ENCODE measurements at regions of chr11 and their contacts with region 1.

Region 1: GRCh38 chr11:13462901-13463778 is at the start of gene BTBD10:
- DNase-seq: peak; percentile 84
- H3K4me3 ChIP-seq: peak within 1 kb of the TSS; percentile 94
- H3K27ac ChIP-seq: peak within 1 kb of the TSS; percentile 68
- H3K4me1 ChIP-seq: peaks cover 20% of the 10 kb centered on the region
- H3K27me3 ChIP-seq: no peaks in the 10 kb centered on the region
- CTCF ChIP-seq: no peak
- total RNA-seq, gene BTBD10: 16.5 and 22.0 TPM in 2 replicates

Region 2: GRCh38 chr11:12813371-12814225 is 649.5 kb before region 1 on chr11:
- CTCF ChIA-PET with region 1: no interaction called
- POLR2A ChIA-PET with region 1: interaction called, 12 read pairs
- intact Hi-C with region 1: no loop called
- DNase-seq: peak; percentile 64 to 71
- H3K4me3 ChIP-seq: no peak overlapping the region
- H3K27ac ChIP-seq: 0 out of 2 replicates have a peak overlapping the region, but pooled peaks have one; percentile 16
- H3K4me1 ChIP-seq: peaks cover 42% of the 10 kb centered on the region
- H3K27me3 ChIP-seq: no peaks in the 10 kb centered on the region
- CTCF ChIP-seq: no peak

Region 3: GRCh38 chr11:13668102-13668956 is 205.2 kb after region 1 on chr11 and contains the start of gene FAR1:
- CTCF ChIA-PET with region 1: no interaction called
- POLR2A ChIA-PET with region 1: interaction called, 5 read pairs
- intact Hi-C with region 1: loop called (anchors 2 kb)
- DNase-seq: peak; percentile 91 to 94
- H3K4me3 ChIP-seq: peak within 1 kb of the TSS; percentile 73
- H3K27ac ChIP-seq: peak within 1 kb of the TSS; percentile 40
- H3K4me1 ChIP-seq: peaks cover 19% of the 10 kb centered on the region
- H3K27me3 ChIP-seq: no peaks in the 10 kb centered on the region
- CTCF ChIP-seq: no peak; the same call in 1 of the 2 replicates
- total RNA-seq, gene FAR1: 34.1 and 34.4 TPM in 2 replicates